ENCODE measurements at regions of chr3 and their contacts with region 1.

Region 1: GRCh38 chr3:187738331-187739093 is 6.8 kb downstream of the BCL6 start:
- DNase-seq: peak; percentile 65 to 78 (median 67)
- H3K4me3 ChIP-seq: peak overlapping the region; percentile 88 to 89
- H3K4me3 Mint-ChIP-seq: peak overlapping the region; percentile 95 to 99 (median 96)
- H3K27ac ChIP-seq: peak overlapping the region; percentile 73
- H3K27ac Mint-ChIP-seq: peak overlapping the region; percentile 77 to 99 (median 94)
- H3K4me1 ChIP-seq: peaks cover 34% of the 10 kb centered on the region
- H3K4me1 Mint-ChIP-seq: peaks cover 22 to 58% (median 36%) of the 10 kb centered on the region in 4 donors
- H3K27me3 ChIP-seq: no peaks in the 10 kb centered on the region
- H3K27me3 Mint-ChIP-seq: no peaks in the 10 kb centered on the region

Region 2: DNA sequence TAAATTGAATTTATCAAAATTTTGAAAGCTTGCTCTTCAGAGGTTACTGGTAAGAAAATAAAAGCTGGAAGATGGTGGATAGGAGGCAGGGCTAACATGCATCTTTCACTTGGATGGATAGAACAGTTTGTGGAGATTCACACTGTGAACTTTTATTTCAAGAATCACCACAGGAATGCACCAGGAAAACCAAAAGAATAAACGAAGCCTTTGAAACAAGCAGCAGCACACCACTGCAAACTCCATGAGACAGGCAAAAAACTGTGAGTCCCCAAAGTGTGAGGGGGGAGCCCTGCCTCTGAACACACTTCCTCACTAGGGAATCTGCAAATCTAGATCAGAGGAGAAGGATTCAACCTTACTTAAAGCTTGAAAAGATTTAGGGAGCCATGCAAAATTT is 248.1 kb before region 1 on chr3:
- CTCF ChIA-PET with region 1: no interaction called
- POLR2A ChIA-PET with region 1: no interaction called
- intact Hi-C with region 1: no loop called
- DNase-seq: no peak
- H3K4me3 ChIP-seq: no peak overlapping the region
- H3K4me3 Mint-ChIP-seq: no peak overlapping the region
- H3K27ac ChIP-seq: no peak overlapping the region
- H3K27ac Mint-ChIP-seq: no peak overlapping the region
- H3K4me1 ChIP-seq: no peaks in the 10 kb centered on the region
- H3K4me1 Mint-ChIP-seq: no peaks in the 10 kb centered on the region
- H3K27me3 ChIP-seq: no peaks in the 10 kb centered on the region
- H3K27me3 Mint-ChIP-seq: peaks cover 12 to 23% of the 10 kb centered on the region in 2 donors

Region 3: DNA sequence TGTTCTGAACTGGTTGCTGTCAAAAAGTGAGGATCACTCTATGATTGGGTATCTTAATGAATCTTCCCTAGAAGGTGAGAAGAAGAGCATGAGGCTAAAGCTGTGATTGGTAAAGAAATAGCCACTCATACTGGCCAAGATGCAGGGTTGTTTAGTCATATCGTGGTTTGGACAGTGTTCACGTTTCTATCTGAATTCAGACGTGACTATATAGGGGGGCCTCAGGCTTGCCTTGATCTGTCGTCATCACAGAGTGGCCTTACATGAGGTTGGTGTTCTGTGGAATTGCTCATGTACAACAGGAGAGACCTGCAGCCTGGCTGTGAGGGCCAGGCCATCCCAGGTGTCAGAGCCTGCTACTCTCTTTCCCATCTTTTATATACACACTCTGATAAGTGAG is 48.5 kb before region 1 on chr3:
- CTCF ChIA-PET with region 1: no interaction called
- POLR2A ChIA-PET with region 1: no interaction called
- intact Hi-C with region 1: no loop called
- DNase-seq: no peak
- H3K4me3 ChIP-seq: no peak overlapping the region
- H3K4me3 Mint-ChIP-seq: no peak overlapping the region
- H3K27ac ChIP-seq: no peak overlapping the region
- H3K27ac Mint-ChIP-seq: no peak overlapping the region
- H3K4me1 ChIP-seq: no peaks in the 10 kb centered on the region
- H3K4me1 Mint-ChIP-seq: no peaks in the 10 kb centered on the region
- H3K27me3 ChIP-seq: no peaks in the 10 kb centered on the region
- H3K27me3 Mint-ChIP-seq: peaks cover 12 to 27% of the 10 kb centered on the region in 2 donors

Region 4: DNA sequence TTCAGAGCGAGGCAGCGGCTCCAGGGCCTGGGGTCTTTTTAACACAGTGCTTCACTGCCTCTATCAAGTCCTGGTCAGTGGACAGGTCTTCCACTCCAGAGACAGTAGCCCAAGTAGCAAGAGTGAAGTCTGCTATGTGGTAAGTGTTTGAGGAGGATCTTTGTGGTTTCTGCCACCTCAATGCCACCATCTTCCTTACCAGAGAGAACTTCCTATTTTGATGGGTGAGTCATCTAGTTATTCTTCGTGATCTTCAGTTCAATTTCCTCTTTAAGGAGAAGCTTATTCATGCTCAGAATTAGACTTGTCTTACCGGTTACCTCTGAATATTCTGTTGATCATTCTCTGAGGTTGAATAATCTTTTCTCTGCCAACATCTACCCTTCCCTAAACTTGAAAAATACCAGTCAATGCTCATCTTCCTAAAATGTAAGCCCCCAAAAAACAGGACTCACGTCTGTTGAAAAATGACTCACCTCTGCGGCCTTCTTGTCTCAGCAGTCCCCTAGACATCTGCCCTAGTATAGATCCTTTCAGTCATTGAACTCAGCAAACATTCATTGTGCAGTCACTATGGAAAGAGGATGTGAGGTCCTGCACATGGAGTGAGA is 38.9 kb after region 1 on chr3:
- CTCF ChIA-PET with region 1: interaction called, 14 read pairs
- POLR2A ChIA-PET with region 1: interaction called, 5 read pairs
- intact Hi-C with region 1: no loop called
- DNase-seq: peak; percentile 52 to 74 (median 61)
- H3K4me3 ChIP-seq: peak overlapping the region in 1 of 2 donors; percentile 17
- H3K4me3 Mint-ChIP-seq: peak overlapping the region in 7 of 8 donors; percentile 0 to 81 (median 70)
- H3K27ac ChIP-seq: peak overlapping the region; percentile 37
- H3K27ac Mint-ChIP-seq: peak overlapping the region; percentile 84 to 97 (median 90)
- H3K4me1 ChIP-seq: peaks cover 27% of the 10 kb centered on the region
- H3K4me1 Mint-ChIP-seq: peaks cover 24 to 35% (median 26%) of the 10 kb centered on the region in 4 donors
- H3K27me3 ChIP-seq: no peaks in the 10 kb centered on the region
- H3K27me3 Mint-ChIP-seq: peaks cover 0 to 2% of the 10 kb centered on the region in 2 donors

Region 5: DNA sequence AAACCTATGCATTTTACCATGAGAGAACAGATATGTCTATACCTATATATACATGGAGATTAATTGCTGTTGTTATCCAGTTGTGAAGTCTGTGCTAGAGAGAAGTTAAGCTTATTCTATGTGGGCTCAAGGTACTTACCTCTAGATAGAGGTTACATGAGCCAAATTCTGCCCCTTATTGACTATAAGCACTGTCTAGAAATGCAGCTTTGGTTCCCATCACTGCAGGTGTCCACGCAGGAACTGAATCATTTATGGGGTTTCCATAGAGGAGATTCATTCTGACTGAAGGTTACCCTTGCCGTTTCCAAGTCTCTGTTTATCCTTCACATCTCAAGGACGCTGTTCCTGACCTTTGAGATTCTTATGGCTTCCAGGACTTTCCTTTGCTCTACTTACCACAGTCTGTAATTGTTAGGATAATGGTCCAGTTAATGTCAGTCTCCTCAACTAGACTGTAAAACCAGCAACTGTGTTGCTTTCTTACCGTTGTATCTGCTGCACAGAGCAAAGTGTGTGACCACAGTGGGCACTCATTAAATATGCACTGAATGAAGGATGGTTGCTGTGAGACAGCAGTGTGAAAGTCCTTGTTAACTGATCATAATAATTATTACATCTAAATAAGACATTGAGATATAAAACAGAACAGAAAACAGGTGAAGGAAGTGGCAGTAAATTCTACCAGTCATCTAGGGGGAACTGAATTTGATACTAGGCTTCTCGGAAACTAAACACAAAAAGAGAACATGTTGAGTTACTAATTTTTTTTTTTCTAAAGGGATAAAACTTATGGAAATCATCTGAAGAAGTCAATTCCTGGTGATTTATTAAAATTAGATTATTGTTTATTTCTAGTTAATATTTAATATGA is 50.7 kb after region 1 on chr3:
- CTCF ChIA-PET with region 1: no interaction called
- POLR2A ChIA-PET with region 1: no interaction called
- intact Hi-C with region 1: no loop called
- DNase-seq: no peak
- H3K4me3 ChIP-seq: no peak overlapping the region
- H3K4me3 Mint-ChIP-seq: no peak overlapping the region
- H3K27ac ChIP-seq: no peak overlapping the region
- H3K27ac Mint-ChIP-seq: peak overlapping the region in 1 of 7 donors; percentile 65
- H3K4me1 ChIP-seq: no peaks in the 10 kb centered on the region
- H3K4me1 Mint-ChIP-seq: peaks cover 0 to 9% (median 9%) of the 10 kb centered on the region in 4 donors
- H3K27me3 ChIP-seq: no peaks in the 10 kb centered on the region
- H3K27me3 Mint-ChIP-seq: peaks cover 0 to 3% of the 10 kb centered on the region in 2 donors

Region 6: DNA sequence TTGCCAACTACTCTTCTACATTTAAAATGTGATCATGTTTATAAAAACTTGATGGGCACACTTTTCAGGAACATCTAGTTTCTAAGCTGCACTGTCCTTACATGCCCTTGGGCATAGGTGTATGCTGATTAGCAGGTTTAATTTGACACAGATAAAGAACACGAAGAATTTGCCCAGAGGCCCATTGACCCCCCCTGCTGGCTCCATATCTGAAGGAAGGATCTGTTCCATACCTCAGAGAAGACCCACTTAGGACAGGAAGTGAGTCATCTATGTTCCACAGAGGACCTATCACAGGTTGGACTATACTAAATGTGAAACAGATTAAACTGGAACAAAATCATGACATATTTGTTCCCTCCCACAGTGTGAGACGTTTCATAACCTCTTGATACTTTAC is 322.6 kb after region 1 on chr3:
- CTCF ChIA-PET with region 1: interaction called, 42 read pairs
- POLR2A ChIA-PET with region 1: interaction called, 8 read pairs
- intact Hi-C with region 1: loop called (anchors 2 kb)
- DNase-seq: peak; percentile 50 to 78 (median 63)
- H3K4me3 ChIP-seq: no peak overlapping the region
- H3K4me3 Mint-ChIP-seq: peak overlapping the region in 2 of 8 donors; percentile 17 to 43
- H3K27ac ChIP-seq: no peak overlapping the region
- H3K27ac Mint-ChIP-seq: peak overlapping the region in 6 of 7 donors; percentile 71 to 95 (median 84)
- H3K4me1 ChIP-seq: peaks cover 12% of the 10 kb centered on the region
- H3K4me1 Mint-ChIP-seq: peaks cover 12 to 19% (median 14%) of the 10 kb centered on the region in 4 donors
- H3K27me3 ChIP-seq: no peaks in the 10 kb centered on the region
- H3K27me3 Mint-ChIP-seq: no peaks in the 10 kb centered on the region

Region 7: GRCh38 chr3:188573291-188573940 is 834.9 kb after region 1 on chr3:
- CTCF ChIA-PET with region 1: interaction called, 10 read pairs
- POLR2A ChIA-PET with region 1: no interaction called
- intact Hi-C with region 1: no loop called
- DNase-seq: no peak
- H3K4me3 ChIP-seq: no peak overlapping the region
- H3K4me3 Mint-ChIP-seq: no peak overlapping the region
- H3K27ac ChIP-seq: no peak overlapping the region
- H3K27ac Mint-ChIP-seq: no peak overlapping the region
- H3K4me1 ChIP-seq: no peaks in the 10 kb centered on the region
- H3K4me1 Mint-ChIP-seq: peaks cover 0 to 11% (median 4%) of the 10 kb centered on the region in 4 donors
- H3K27me3 ChIP-seq: no peaks in the 10 kb centered on the region
- H3K27me3 Mint-ChIP-seq: no peaks in the 10 kb centered on the region

Region 8: GRCh38 chr3:188797045-188797444 is 1058.5 kb after region 1 on chr3:
- CTCF ChIA-PET with region 1: interaction called, 10 read pairs
- POLR2A ChIA-PET with region 1: no interaction called
- intact Hi-C with region 1: no loop called
- DNase-seq: no peak
- H3K4me3 ChIP-seq: no peak overlapping the region
- H3K4me3 Mint-ChIP-seq: no peak overlapping the region
- H3K27ac ChIP-seq: no peak overlapping the region
- H3K27ac Mint-ChIP-seq: peak overlapping the region in 1 of 7 donors; percentile 13
- H3K4me1 ChIP-seq: no peaks in the 10 kb centered on the region
- H3K4me1 Mint-ChIP-seq: peaks cover 0 to 2% (median 1%) of the 10 kb centered on the region in 4 donors
- H3K27me3 ChIP-seq: no peaks in the 10 kb centered on the region
- H3K27me3 Mint-ChIP-seq: no peaks in the 10 kb centered on the region

Region 9: DNA sequence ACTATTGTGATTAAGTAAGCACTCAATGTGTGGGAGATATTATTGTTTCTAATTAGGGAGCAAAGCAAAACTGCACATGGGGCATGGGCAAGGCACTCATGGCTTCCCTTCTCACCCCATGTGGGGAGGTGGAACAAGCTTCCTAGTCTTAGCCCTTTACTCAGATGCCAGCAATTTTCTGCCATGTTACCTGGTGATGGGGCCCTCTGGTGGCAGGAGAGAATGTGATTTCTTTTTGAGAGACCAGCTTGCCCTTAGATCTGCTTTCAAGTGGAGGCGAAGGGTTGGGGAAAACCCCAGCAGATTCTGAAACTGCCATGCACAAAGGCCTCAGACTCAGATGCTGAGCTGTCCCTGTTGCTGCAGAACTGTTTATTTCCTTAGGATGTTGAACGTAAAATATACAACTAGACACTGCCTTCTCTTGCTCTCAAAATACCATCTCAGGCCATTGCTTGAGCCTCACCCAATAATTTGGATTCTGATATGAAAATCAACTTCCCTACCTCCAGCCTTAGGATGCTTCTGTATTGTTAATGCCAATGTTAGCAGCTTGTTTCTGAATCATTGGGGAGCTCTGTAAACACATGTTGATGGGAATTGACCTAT is 1303.1 kb after region 1 on chr3:
- CTCF ChIA-PET with region 1: interaction called, 216 read pairs
- POLR2A ChIA-PET with region 1: interaction called, 19 read pairs
- intact Hi-C with region 1: loop called (anchors 1 kb)
- DNase-seq: peak; percentile 72 to 82 (median 78)
- H3K4me3 ChIP-seq: no peak overlapping the region
- H3K4me3 Mint-ChIP-seq: no peak overlapping the region
- H3K27ac ChIP-seq: peak overlapping the region; percentile 52
- H3K27ac Mint-ChIP-seq: peak overlapping the region; percentile 8 to 87 (median 50)
- H3K4me1 ChIP-seq: peaks cover 7% of the 10 kb centered on the region
- H3K4me1 Mint-ChIP-seq: peaks cover 6 to 11% (median 8%) of the 10 kb centered on the region in 4 donors
- H3K27me3 ChIP-seq: no peaks in the 10 kb centered on the region
- H3K27me3 Mint-ChIP-seq: no peaks in the 10 kb centered on the region

Region 10: DNA sequence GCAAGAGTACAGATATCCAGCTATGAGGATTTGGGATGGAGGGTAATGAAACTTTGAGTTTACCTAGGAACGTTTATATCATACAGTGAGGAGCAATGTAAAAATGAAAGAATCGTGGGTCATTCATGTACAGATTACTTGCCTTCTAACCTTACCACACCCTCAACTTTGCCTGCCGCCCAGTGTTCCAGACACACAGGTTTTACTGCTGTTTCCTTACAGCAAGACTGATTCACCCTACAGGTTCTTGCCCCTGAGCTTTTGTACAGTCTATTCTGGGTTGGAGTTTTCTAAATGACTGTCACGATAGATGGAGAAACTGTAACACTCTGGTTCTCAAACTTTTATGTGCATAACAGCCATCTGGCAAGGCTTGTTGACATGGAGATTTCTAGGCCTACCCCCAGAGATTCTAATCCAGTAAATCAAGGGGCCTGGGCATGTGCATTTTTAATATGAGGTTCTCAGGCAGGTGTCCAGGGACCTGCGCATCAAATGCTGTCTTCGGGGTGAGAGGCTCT is 1426.6 kb after region 1 on chr3:
- CTCF ChIA-PET with region 1: interaction called, 13 read pairs
- POLR2A ChIA-PET with region 1: no interaction called
- intact Hi-C with region 1: no loop called
- DNase-seq: no peak
- H3K4me3 ChIP-seq: no peak overlapping the region
- H3K4me3 Mint-ChIP-seq: no peak overlapping the region
- H3K27ac ChIP-seq: no peak overlapping the region
- H3K27ac Mint-ChIP-seq: peak overlapping the region in 1 of 7 donors; percentile 49
- H3K4me1 ChIP-seq: no peaks in the 10 kb centered on the region
- H3K4me1 Mint-ChIP-seq: peaks cover 0 to 11% (median 0%) of the 10 kb centered on the region in 4 donors
- H3K27me3 ChIP-seq: no peaks in the 10 kb centered on the region
- H3K27me3 Mint-ChIP-seq: no peaks in the 10 kb centered on the region

Measured in CD4-positive, alpha-beta memory T cell (primary cell).